WTC11 (cell line): ENCODE measurements at regions of chr20 and their contacts with region 1.

Region 1: GRCh38 chr20:21048841-21049273 is 57.3 kb downstream of the LINC00237 start:
- DNase-seq: peak; percentile 88
- ATAC-seq: peak; percentile 88
- H3K4me3 Mint-ChIP-seq: no peak overlapping the region
- H3K27ac Mint-ChIP-seq: no peak overlapping the region
- H3K4me1 Mint-ChIP-seq: peaks cover 18% of the 10 kb centered on the region
- H3K27me3 Mint-ChIP-seq: no peaks in the 10 kb centered on the region
- CTCF ChIP-seq: peak; percentile 85

Region 2: GRCh38 chr20:20843982-20844381 is 204.9 kb before region 1 on chr20:
- CTCF ChIA-PET with region 1: interaction called, 20 read pairs
- POLR2A ChIA-PET with region 1: no interaction called
- DNase-seq: peak; percentile 58
- ATAC-seq: peak; percentile 98
- H3K4me3 Mint-ChIP-seq: no peak overlapping the region
- H3K27ac Mint-ChIP-seq: no peak overlapping the region
- H3K4me1 Mint-ChIP-seq: no peaks in the 10 kb centered on the region
- H3K27me3 Mint-ChIP-seq: no peaks in the 10 kb centered on the region; the same call in none of the 2 replicates
- CTCF ChIP-seq: no peak

Region 3: GRCh38 chr20:21027569-21027968 is 21.3 kb before region 1 on chr20:
- CTCF ChIA-PET with region 1: interaction called, 16 read pairs
- POLR2A ChIA-PET with region 1: no interaction called
- DNase-seq: peak; percentile 69
- ATAC-seq: peak; percentile 99
- H3K4me3 Mint-ChIP-seq: no peak overlapping the region
- H3K27ac Mint-ChIP-seq: no peak overlapping the region
- H3K4me1 Mint-ChIP-seq: peaks cover 2% of the 10 kb centered on the region; the same call in 1 of the 2 replicates
- H3K27me3 Mint-ChIP-seq: no peaks in the 10 kb centered on the region; the same call in 1 of the 2 replicates
- CTCF ChIP-seq: no peak

Region 4: DNA sequence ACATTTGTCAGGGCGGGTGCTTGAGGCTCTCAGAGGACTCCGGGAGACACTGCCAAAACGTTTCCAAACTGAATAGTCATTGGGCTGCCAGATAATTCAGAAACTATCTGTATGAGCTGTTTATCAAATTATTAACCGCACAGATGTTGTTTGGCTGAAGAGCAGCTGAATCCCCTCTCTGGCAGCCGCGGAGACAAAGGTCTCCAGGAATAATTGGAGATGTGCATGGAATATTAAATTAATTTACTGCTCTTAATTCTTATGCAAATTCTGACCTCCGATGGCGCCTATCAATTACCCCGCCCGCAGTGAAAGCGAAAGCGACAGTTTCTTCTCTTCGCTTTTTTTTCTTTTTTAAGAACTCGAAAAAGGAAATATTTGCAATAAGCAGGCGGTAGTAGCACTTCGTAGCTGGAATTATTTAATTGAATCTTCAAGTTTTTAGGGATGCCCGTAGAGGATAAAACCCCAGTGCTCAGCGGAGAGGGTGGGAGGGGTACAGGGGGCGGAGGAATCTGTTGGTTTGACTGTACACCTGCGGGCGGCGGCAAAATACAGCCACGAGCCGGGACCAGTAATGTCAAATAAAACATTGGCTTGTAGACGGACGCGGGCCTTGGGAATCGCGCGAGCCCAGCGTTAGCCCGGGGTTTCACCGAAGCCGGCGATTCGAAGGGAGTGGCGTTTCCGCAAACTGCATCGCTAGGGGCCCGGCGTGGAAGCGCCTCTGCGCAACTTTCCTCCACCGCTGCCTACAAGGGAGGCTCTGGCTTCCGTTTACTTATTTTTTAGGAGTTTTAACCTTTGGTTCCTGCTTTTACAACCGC is 51.1 kb after region 1 on chr20:
- CTCF ChIA-PET with region 1: interaction called, 31 read pairs
- POLR2A ChIA-PET with region 1: no interaction called
- DNase-seq: peak; percentile 60
- ATAC-seq: no peak
- H3K4me3 Mint-ChIP-seq: peak overlapping the region; percentile 87
- H3K27ac Mint-ChIP-seq: peak overlapping the region; percentile 95
- H3K4me1 Mint-ChIP-seq: peaks cover 55% of the 10 kb centered on the region
- H3K27me3 Mint-ChIP-seq: peaks cover 85% of the 10 kb centered on the region
- CTCF ChIP-seq: no peak

Region 5: GRCh38 chr20:21228511-21228910 is 179.7 kb after region 1 on chr20:
- CTCF ChIA-PET with region 1: no interaction called
- POLR2A ChIA-PET with region 1: no interaction called
- DNase-seq: no peak
- ATAC-seq: no peak
- H3K4me3 Mint-ChIP-seq: no peak overlapping the region
- H3K27ac Mint-ChIP-seq: no peak overlapping the region
- H3K4me1 Mint-ChIP-seq: peaks cover 43% of the 10 kb centered on the region
- H3K27me3 Mint-ChIP-seq: no peaks in the 10 kb centered on the region
- CTCF ChIP-seq: no peak